Posterior vena cava (tissue), 2 donors: ENCODE measurements at regions of chr3 and their contacts with region 1.

Region 1: DNA sequence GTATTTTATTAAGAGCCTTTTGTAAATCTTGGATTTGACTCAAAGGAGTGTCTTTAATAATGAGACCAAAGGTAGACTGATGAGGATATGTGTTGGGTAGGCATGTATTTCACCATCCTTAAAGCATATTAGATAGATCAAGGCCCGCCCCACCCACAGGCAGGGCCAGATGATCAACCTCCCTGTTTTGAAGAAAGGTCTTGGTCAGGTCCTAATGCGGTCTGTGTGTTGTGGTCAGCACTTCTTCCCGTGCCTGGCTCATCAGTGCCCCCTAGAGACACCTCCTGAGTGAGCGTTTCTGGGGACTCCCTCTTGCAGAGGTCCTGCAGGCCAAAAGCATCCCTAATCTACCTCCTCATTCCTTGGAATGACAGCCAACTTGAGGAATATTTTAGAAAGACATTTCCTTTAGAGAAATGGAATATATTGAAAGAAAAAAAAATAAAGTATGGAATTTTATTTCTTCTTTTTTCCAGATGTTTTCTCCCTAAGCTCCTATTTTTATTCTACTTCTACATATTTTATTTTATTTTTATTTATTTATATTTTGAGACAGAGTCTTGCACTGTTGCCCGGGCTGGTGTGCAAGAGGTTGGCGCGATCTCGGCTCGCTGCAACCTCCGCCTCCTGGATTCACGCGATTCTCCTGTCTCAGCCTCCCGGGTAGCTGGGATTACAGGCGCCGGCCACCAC is 6.0 kb downstream of the TM4SF4 start:
- DNase-seq: peak; percentile 94

Region 2: DNA sequence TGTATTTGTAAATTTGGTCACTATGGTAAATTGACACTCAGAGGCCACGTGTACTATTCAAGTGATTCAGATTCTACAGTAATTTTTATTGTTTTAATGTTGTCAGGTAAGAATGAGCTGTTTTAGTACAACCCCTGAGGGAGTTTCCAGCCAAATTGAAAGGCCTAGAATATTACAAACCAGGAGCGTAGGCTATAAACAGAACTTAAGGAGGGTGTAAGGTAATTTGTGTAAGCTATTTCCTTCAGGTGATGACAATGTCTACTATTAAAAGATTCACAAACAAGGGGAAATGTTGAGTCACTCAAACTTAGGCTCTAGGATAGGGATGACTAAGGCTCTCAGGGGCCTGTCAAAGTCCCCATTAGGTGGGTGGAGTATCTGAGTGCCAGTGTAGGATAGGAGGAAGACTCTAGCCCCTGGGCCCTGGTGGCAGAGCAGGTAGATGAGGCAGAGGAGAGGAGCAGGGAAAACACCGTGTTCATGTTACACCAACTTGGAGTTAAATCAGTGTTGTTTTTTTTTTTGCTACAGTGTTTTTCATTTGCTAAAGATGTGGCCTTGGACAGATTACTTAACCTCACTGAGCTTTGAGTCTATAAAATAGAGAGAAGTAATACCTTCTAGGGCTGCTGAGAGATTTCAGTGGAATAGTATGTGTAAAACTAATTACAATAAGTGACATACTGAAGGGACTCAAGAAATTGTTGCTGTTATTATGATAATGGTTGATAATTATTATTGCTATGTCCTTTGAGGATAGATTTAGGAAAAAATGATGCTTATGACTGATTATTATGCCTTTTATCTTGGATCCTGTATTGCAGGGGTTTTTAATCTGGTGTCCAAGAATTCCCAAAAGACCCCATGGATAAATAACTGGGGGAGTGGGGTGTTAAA is 113.3 kb before region 1 on chr3:
- intact Hi-C with region 1: no loop called
- DNase-seq: no peak

Region 3: DNA sequence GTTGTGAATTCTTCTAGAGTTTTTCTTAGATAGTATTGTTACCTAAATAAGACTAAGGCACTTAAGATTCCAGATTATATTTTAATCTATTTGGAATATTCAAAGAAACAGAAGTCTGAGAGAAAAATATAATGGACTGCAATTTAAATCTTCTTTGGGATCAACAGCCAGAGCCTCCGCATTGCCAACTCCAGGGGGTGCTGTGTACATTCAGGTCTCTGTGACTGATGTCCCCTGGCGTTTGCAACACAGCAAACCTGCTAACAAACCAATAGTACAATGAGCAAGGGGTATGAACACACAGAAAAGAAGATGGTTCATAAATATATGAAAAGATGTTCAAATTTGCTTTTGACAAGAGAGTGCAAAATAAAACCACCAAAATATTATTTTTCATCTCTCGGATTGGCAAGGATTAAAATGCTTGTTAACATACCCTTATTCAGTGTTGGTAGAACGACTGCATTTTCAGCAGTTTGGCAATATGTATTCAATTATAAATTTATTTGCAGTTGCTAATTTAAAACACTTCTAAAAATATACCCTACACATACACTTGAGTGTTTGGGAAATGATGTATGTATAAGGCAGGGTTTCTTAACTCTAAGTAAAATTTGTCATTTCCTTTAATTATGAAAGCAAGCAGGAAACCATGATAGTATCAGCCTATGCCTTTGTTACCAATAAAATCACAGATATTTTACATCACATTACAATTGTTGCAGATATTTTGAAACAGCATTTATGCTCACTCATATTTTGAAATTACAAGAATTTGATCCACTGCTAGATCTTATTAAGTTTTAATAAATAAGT is 86.9 kb before region 1 on chr3:
- intact Hi-C with region 1: loop called (anchors 5 kb)
- DNase-seq: peak; percentile 85

Region 4: GRCh38 chr3:149736175-149736952 is 255.9 kb after region 1 on chr3:
- intact Hi-C with region 1: no loop called
- DNase-seq: no peak